ENCODE measurements at regions of chr6 and their contacts with region 1.

Region 1: DNA sequence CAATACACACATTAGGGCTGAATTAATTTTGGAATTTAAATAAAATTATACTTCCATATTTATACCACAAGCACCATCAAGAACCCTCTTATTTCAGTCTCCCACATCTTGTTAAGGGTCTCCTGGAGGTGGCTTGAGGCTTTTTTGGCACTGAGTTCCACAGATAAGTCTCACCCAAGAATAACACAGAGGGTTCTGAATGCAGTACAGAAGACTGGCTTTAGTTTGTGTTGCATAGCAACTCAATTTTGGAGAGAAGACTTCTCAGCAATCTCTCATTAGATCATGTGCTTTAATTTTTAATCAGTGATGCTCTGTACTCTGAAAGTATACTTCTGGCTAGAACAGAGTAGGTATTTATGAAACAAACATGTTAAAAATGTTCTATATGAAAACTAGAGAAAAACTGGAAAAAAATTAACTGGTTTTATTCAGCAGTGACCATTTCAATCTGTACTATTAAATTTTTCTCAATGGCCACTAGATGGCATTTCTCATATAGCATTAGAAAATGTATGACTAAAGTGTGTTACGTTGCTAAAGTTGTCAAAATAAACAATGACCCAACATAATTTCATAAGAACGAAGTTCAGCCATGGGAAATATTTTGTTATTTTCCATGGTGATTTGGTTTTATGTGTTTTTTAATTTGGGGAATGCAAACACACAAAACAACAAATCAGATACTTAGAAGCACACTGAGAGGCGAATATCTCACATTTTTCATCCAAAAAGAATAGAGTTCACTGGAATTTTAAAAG is 32.7 kb upstream of the MAP7 start:
- DNase-seq: peak; percentile 76
- H3K4me3 Mint-ChIP-seq: no peak overlapping the region
- H3K27ac Mint-ChIP-seq: peak overlapping the region; percentile 96
- H3K4me1 Mint-ChIP-seq: peaks cover 23% of the 10 kb centered on the region
- H3K27me3 Mint-ChIP-seq: no peaks in the 10 kb centered on the region
- CTCF ChIP-seq: peak; percentile 47

Region 2: DNA sequence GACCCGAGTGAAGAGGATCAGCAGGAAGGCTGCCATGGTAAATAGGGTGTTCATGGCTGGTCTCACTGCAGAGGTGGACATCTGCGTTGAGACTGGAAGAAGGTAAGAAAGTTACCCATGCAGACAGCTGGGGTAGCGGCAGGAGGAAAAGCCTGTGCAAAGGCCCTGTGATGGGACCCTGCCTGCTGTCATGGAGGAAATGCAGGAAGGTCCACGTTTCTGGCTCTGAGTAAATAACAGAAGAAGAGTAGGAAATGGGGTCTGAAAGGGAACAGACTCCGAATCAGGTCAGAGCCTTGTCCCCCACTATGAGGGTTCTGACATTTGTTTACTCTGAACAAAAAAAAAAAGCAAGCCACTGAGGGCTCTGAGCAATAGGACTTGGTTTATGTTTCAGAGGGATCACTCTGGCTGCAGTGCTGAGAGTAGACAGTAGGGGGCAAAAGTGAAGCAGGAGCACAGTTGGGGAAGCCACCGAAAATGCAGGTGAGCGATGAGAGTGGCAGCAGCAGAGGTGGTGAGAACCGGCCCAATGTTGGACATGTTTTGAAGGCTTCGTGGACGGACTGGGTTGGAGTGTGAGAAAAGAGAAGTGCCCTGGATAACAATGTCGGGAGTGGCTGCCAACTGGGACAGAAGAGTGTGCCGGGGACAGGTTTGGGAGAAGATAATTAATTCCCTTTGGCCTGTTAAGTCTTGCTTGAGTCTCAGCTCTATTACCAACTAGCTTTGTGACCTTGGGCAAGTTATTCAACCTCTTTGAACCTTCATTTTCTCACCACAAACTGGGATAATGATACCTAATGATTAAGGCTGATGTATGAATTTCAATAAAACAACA is 25.3 kb after region 1 on chr6:
- CTCF ChIA-PET with region 1: interaction called, 4 read pairs
- POLR2A ChIA-PET with region 1: interaction called, 5 read pairs
- intact Hi-C with region 1: loop called (anchors 1 kb)
- DNase-seq: peak; percentile 91
- H3K4me3 Mint-ChIP-seq: peak overlapping the region; percentile 11
- H3K27ac Mint-ChIP-seq: peak overlapping the region; percentile 94
- H3K4me1 Mint-ChIP-seq: peaks cover 37% of the 10 kb centered on the region
- H3K27me3 Mint-ChIP-seq: no peaks in the 10 kb centered on the region
- CTCF ChIP-seq: peak; percentile 67